ENCODE measurements at regions of chr4 and their contacts with region 1.

Region 1: GRCh38 chr4:180909279-180909678 is 1333.9 kb upstream of the TENM3 start:
- DNase-seq: peak; percentile 27 to 62
- H3K4me3 ChIP-seq: no peak overlapping the region
- H3K27ac ChIP-seq: no peak overlapping the region
- H3K4me1 ChIP-seq: no peaks in the 10 kb centered on the region
- H3K27me3 ChIP-seq: no peaks in the 10 kb centered on the region
- CTCF ChIP-seq: peak; percentile 51 to 76 (median 69)
- EP300 ChIP-seq: no peak
- POLR2A ChIP-seq: no peak
- RAD21 ChIP-seq: peak; percentile 77 to 84

Region 2: DNA sequence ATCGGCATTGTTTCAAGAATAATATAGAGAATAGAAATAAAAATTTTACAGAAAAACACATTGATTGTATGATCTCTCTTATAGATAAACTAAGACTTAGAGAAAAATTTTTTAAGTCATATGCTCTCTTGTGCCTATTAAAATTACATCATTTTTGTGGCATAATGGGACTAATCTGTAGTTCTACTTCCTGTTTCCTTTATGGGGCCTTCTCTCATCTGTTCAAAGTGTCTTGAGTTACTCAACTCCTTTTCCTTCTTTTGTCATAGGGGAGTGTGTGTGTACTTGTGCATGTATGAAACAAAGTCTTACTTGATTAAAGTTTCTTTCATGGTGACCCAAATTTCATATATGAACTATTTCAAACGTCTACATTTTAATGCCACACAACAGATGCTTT is 114.9 kb before region 1 on chr4:
- CTCF ChIA-PET with region 1: no interaction called
- POLR2A ChIA-PET with region 1: no interaction called
- DNase-seq: no peak
- H3K4me3 ChIP-seq: no peak overlapping the region
- H3K27ac ChIP-seq: no peak overlapping the region
- H3K4me1 ChIP-seq: peaks cover 0 to 11% (median 4%) of the 10 kb centered on the region in 4 experiments; a peak in 4 of 7 replicates
- H3K27me3 ChIP-seq: no peaks in the 10 kb centered on the region
- CTCF ChIP-seq: no peak
- EP300 ChIP-seq: no peak
- POLR2A ChIP-seq: no peak
- RAD21 ChIP-seq: no peak

Region 3: GRCh38 chr4:180923486-180923885 is 14.2 kb after region 1 on chr4:
- CTCF ChIA-PET with region 1: interaction called, 48 read pairs
- POLR2A ChIA-PET with region 1: no interaction called
- DNase-seq: no peak
- H3K4me3 ChIP-seq: no peak overlapping the region
- H3K27ac ChIP-seq: no peak overlapping the region
- H3K4me1 ChIP-seq: peaks cover 0 to 4% (median 1%) of the 10 kb centered on the region in 4 experiments; a peak in 2 of 7 replicates
- H3K27me3 ChIP-seq: no peaks in the 10 kb centered on the region
- CTCF ChIP-seq: no peak
- EP300 ChIP-seq: no peak
- POLR2A ChIP-seq: no peak
- RAD21 ChIP-seq: no peak

Region 4: DNA sequence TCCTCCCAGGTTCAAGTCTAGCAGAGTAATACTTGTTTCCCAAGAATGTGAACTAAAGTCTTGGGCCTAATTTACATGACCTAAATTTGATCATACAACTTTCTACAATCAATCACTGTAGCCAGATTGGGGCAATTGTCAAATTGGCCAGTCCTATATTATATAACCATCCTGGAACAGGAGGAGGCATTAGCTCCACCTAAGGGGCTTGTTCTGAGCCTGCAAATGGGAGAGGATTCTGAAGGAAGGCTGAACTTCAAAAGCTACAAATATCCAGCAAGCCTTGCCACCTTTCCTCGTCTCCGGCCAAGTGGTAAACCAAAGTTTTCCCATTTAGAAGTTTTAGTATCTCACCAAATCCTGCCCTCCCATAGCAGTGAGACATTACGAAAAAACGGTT is 44.3 kb after region 1 on chr4:
- CTCF ChIA-PET with region 1: interaction called, 14 read pairs
- POLR2A ChIA-PET with region 1: no interaction called
- DNase-seq: no peak
- H3K4me3 ChIP-seq: no peak overlapping the region
- H3K27ac ChIP-seq: no peak overlapping the region
- H3K4me1 ChIP-seq: no peaks in the 10 kb centered on the region; a peak in 1 of 7 replicates
- H3K27me3 ChIP-seq: no peaks in the 10 kb centered on the region
- CTCF ChIP-seq: peak in 2 of 3 experiments; percentile 41 to 65; a peak in 3 of 4 replicates
- EP300 ChIP-seq: no peak
- POLR2A ChIP-seq: no peak
- RAD21 ChIP-seq: peak; percentile 42 to 57

Region 5: GRCh38 chr4:181213551-181213950 is 304.3 kb after region 1 on chr4:
- CTCF ChIA-PET with region 1: no interaction called
- POLR2A ChIA-PET with region 1: no interaction called
- DNase-seq: no peak
- H3K4me3 ChIP-seq: no peak overlapping the region
- H3K27ac ChIP-seq: no peak overlapping the region
- H3K4me1 ChIP-seq: no peaks in the 10 kb centered on the region
- H3K27me3 ChIP-seq: no peaks in the 10 kb centered on the region
- CTCF ChIP-seq: no peak
- EP300 ChIP-seq: no peak
- POLR2A ChIP-seq: no peak
- RAD21 ChIP-seq: no peak